Cardiac septum (tissue), 1 donor: ENCODE measurements at regions of chr22 and their contacts with region 1.

Region 1: DNA sequence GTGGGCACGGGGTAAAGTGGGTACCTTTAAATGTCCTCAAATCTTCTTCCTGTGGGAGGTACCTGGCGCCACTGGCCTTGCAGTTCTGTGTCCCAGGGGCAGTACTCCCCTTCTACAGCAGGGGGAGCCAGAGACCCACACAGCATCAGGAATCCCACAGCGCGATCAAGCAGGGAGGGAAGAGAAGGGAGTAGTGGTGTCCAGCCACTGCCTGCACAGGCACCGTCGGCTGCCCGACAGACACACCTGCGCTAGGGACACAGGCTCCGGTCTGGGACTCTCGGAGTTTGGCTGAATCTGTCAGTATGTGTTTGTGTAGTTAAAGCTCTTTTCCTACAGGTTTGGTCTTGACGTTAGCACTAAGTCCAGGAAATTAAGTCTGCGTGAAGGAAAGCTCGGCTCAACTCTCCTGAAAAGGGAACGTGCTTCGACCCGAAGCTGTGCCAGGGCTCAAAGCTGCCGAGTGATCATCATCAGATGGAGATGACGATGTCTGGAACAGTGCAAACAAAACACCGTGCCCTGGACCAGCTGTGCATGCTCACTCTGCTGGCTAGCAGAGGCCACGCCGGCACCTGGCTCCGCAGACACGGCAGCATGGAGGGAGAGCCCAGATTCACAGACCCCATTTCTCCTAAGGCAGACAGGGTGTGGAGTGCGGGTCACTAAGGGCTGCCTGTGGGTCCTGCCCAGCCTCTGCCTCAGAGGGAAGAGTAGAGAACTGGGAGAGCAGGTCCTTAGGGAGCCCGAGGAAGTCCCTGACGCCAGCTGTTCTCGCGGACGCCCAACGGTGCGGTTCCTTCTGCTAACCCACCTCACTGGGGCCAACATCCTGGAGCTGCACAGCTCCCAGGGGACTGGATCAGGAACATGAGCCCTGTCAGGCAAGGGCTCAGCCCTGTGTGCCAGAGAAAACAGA is 56.0 kb upstream of the BID start:
- DNase-seq: peak; percentile 92

Region 2: GRCh38 chr22:17726464-17727246 is 103.6 kb before region 1 on chr22:
- intact Hi-C with region 1: no loop called
- DNase-seq: no peak

Region 3: DNA sequence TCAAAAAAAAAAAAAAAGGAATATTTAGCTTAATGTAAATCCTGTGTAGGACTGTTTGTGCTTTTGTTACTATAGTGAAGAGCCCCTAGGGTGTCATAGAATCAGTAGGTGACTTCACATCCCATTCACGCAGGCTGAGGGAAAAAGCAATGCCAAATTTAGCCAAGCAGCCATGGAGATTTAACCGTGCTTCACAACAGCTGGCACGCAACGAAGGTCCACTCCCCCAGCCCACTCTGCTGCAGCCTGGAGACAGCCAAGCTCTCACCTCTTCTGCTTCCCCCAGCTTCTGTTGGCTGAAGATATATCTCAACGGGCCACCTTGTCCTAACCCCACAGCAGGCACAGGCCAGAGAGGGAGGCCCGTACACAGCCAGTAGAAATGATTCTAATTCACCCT is 22.8 kb after region 1 on chr22:
- intact Hi-C with region 1: loop called (anchors 2 kb)
- DNase-seq: no peak

Region 4: DNA sequence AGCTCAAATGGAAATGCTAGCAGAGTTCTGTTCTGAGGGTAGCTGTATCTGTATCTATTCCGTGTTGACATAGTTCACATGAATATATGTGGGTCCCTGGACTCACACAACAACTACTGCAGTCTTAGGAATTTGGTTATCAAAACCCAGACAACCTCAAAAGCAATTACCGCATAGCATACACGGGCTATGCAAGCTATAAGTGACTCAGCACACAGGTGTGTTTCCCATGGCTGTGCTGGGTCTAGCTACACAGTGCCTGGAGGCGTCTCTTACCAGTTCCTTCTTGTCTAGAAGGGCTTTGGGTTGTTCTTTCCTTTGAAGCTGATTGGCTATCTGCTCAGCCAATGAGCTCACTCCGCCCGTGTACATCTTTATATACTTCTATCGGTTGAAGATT is 42.2 kb after region 1 on chr22:
- intact Hi-C with region 1: loop called (anchors 5 kb)
- DNase-seq: no peak

Region 5: GRCh38 chr22:17891481-17892167 is 61.3 kb after region 1 on chr22:
- intact Hi-C with region 1: loop called (anchors 2 kb)
- DNase-seq: no peak

Region 6: GRCh38 chr22:18024276-18024947 is 194.1 kb after region 1 on chr22 and contains the start of gene MICAL3:
- intact Hi-C with region 1: loop called (anchors 2 kb)
- DNase-seq: no peak
- total RNA-seq, gene MICAL3: 126 TPM